Activated CD4-positive, alpha-beta T cell treated with anti-CD3 and anti-CD28 coated beads for 36 hours (primary cell): ENCODE measurements at regions of chr18 and their contacts with region 1.

Region 1: DNA sequence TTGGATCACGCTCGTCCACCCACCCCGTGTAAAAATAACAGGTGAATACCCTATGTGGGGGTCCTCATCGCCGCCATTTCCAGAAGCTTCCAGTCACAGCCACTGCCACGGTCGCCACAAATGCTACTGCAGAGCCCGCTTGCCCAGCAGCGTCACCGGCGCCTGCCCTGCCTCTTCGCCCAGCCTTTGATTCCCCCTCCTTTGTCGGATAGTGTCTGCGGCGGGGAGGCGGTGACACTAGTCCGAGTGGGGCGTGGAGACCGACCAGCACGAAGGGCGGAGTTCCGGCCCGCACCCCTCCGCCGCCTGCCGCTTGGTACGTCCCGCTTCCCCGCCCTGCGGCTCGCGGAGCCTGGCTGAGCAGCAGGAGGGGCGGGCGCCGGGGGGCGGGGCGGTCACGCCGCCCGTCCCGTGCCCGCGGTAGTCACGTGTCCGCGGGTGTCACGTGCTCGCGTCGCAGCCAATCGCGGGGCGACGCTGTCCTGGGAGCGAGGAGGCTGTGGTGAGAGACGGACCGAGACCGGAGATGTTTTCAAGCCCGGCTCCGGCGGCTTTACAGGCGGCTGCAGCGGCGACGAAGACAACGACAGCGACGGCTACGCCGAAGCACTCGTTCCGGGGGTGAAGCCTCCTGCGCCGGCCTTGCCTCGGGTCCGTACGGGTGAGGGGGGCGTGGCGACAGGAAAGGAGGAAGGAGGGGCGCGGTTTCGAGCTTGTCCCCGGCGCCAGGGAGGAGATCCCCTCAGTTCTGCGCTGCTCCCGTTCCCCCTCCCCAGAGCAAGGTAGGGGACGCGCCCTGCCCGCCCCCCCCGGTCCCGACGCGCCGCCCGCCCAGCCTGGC is at the start of gene ANKRD12:
- DNase-seq: peak; percentile 98
- ATAC-seq: peak; percentile 75
- H3K4me3 Mint-ChIP-seq: peak within 1 kb of the TSS; percentile 86
- H3K27ac Mint-ChIP-seq: peak within 1 kb of the TSS; percentile 97
- H3K4me1 Mint-ChIP-seq: peaks cover 53% of the 10 kb centered on the region
- H3K27me3 Mint-ChIP-seq: no peaks in the 10 kb centered on the region
- total RNA-seq, gene ANKRD12: 57.5 to 96.0 TPM

Region 2: DNA sequence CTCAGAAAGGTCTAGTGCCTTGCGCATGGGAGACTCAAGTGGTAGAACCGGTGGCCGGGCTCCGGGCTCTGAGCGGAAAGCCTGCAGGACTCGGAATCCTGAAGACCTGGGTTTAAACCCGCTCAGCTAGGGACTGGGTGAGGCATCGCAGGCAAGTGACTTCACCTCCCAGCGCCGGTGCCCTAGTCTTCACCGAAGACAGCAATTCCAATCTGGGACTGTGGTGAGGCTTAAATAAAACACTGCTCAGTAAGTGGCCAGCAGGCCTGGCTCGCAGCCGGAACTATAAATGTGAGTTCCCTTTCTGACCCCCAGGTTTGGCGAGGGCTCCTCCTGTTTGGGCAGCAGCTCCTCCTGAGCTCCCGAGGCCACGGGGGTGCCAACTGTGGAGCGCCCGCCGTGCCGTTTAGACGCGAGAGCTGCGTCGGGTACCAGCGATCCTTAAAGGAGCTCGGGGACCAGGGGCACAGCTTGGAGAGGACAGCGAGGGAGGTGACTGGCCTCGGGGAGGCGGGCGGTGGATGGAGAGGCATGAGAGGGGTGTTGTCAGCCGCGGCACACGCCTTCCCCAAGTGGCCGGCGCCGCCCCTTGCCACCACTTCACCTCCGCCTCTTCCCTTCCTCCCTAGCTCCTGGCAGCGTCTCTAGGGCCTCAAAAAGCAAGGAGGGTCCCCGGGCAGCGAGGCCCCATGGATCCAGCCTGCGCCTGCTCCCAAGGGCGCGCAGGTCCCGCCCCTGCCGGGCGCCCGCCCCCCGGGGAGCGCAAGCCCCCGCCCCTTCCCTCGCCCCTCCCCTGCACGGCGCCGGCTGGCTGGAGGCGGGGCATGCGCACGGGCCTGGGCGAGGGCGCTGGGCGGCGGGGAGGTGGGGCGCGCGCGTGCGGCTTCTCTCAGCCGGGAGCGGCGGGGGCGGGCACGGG is 431.9 kb before region 1 on chr18:
- CTCF ChIA-PET with region 1: no interaction called
- POLR2A ChIA-PET with region 1: no interaction called
- intact Hi-C with region 1: loop called (anchors 2 to 10 kb)
- DNase-seq: peak; percentile 90
- ATAC-seq: peak; percentile 98
- H3K4me3 Mint-ChIP-seq: peak overlapping the region; percentile 80
- H3K27ac Mint-ChIP-seq: no peak overlapping the region
- H3K4me1 Mint-ChIP-seq: peaks cover 12% of the 10 kb centered on the region
- H3K27me3 Mint-ChIP-seq: peaks cover 47% of the 10 kb centered on the region

Region 3: GRCh38 chr18:9082711-9083510 is 53.6 kb before region 1 on chr18:
- CTCF ChIA-PET with region 1: interaction called, 10 read pairs
- POLR2A ChIA-PET with region 1: interaction called, 30 read pairs
- intact Hi-C with region 1: loop called (anchors 1 to 2 kb)
- DNase-seq: peak; percentile 80
- ATAC-seq: peak; percentile 91
- H3K4me3 Mint-ChIP-seq: peak overlapping the region; percentile 62
- H3K27ac Mint-ChIP-seq: peak overlapping the region; percentile 96
- H3K4me1 Mint-ChIP-seq: peaks cover 41% of the 10 kb centered on the region
- H3K27me3 Mint-ChIP-seq: no peaks in the 10 kb centered on the region

Region 4: GRCh38 chr18:9109523-9109922 is 27.0 kb before region 1 on chr18:
- CTCF ChIA-PET with region 1: interaction called, 12 read pairs
- POLR2A ChIA-PET with region 1: interaction called, 27 read pairs
- intact Hi-C with region 1: no loop called
- DNase-seq: no peak
- ATAC-seq: peak; percentile 58
- H3K4me3 Mint-ChIP-seq: peak overlapping the region; percentile 55
- H3K27ac Mint-ChIP-seq: peak overlapping the region; percentile 77
- H3K4me1 Mint-ChIP-seq: peaks cover 87% of the 10 kb centered on the region
- H3K27me3 Mint-ChIP-seq: no peaks in the 10 kb centered on the region

Region 5: DNA sequence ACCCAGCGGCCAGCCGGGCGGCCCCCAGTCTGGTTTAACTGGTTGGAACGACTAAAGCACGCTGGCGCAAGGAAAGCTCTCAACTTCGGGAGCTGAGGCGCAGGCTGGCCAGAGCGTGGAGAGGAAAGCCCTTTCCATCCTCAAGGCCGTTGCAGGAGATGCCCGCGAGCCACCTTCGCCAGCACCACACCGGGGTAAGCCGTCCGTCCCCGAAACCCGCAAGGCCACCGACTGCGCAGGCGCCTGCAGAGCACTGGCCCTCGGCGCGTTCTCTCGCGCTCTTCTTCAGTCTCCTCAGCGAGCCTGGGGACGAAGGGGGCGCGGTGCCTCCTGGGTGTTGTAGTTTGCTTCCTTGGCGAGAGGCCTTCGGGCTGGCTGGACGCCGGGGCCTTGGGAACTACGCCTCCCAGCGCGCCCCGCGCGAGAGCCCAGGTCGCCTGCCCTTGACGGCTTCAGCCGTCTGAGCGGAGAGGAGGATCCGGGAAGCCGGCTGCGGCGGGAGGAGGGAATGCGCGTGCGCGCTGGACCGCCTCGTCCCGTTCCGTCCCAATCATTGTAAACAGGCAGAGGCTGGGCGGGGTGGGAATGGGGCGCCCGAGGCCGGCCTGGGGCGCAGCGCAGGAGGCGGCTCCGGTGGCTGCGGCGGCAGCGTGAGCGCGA is 338.6 kb after region 1 on chr18 and contains the start of gene RALBP1:
- CTCF ChIA-PET with region 1: no interaction called
- POLR2A ChIA-PET with region 1: no interaction called
- intact Hi-C with region 1: loop called (anchors 1 to 10 kb)
- DNase-seq: peak; percentile 99
- ATAC-seq: peak; percentile 98
- H3K4me3 Mint-ChIP-seq: peak within 1 kb of the TSS; percentile 85
- H3K27ac Mint-ChIP-seq: peak within 1 kb of the TSS; percentile 92
- H3K4me1 Mint-ChIP-seq: peaks cover 16% of the 10 kb centered on the region
- H3K27me3 Mint-ChIP-seq: peaks cover 8% of the 10 kb centered on the region
- total RNA-seq, gene RALBP1: 49.4 to 51.1 TPM

Region 6: DNA sequence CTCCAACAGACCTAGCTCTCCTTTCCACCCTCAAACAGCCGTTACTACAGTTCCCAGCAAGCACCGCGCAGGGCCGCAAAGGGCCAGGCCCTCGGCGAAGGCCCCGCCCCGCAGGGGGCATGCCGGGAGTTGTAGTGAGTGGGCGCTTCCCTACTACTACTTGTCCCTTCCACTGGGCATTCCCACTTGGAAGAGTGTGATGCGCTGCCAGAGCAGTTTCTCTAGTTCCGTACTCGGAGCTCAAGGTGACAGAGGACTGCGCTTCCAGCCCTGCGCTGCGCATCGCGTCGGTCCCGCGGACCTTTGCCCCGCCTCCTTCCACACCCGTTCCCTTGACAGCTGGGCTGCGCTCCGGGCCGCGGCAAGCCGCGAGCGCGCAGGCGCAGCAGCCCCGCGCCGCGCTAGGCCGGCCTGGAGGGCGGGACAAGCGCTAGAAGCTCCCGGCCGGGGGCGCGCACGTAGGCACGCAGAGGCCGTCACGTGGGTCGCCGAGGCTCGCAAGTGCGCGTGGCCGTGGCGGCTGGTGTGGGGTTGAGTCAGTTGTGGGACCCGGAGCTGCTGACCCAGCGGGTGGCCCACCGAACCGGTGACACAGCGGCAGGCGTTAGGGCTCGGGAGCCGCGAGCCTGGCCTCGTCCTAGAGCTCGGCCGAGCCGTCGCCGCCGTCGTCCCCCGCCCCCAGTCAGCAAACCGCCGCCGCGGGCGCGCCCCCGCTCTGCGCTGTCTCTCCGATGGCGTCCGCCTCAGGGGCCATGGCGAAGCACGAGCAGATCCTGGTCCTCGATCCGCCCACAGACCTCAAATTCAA is 777.2 kb after region 1 on chr18 and contains the start of gene VAPA:
- CTCF ChIA-PET with region 1: no interaction called
- POLR2A ChIA-PET with region 1: no interaction called
- intact Hi-C with region 1: loop called in 1 of 2 experiments (anchors 1 kb)
- DNase-seq: peak; percentile 96
- ATAC-seq: peak; percentile 86
- H3K4me3 Mint-ChIP-seq: peak within 1 kb of the TSS; percentile 89
- H3K27ac Mint-ChIP-seq: peak within 1 kb of the TSS; percentile 93
- H3K4me1 Mint-ChIP-seq: peaks cover 20% of the 10 kb centered on the region
- H3K27me3 Mint-ChIP-seq: peaks cover 5% of the 10 kb centered on the region
- total RNA-seq, gene VAPA: 156 to 220 TPM